Caco-2 (cell line): ENCODE measurements at regions of chr4 and their contacts with region 1.

Region 1: GRCh38 chr4:94833394-94833793 is 75.6 kb downstream of the BMPR1B start:
- DNase-seq: no peak
- H3K4me3 ChIP-seq: no peak overlapping the region
- H3K4me3 Mint-ChIP-seq: no peak overlapping the region
- H3K27ac Mint-ChIP-seq: no peak overlapping the region
- H3K4me1 ChIP-seq: no peaks in the 10 kb centered on the region
- H3K4me1 Mint-ChIP-seq: no peaks in the 10 kb centered on the region
- H3K27me3 ChIP-seq: no peaks in the 10 kb centered on the region
- H3K27me3 Mint-ChIP-seq: no peaks in the 10 kb centered on the region
- CTCF ChIP-seq: no peak

Region 2: DNA sequence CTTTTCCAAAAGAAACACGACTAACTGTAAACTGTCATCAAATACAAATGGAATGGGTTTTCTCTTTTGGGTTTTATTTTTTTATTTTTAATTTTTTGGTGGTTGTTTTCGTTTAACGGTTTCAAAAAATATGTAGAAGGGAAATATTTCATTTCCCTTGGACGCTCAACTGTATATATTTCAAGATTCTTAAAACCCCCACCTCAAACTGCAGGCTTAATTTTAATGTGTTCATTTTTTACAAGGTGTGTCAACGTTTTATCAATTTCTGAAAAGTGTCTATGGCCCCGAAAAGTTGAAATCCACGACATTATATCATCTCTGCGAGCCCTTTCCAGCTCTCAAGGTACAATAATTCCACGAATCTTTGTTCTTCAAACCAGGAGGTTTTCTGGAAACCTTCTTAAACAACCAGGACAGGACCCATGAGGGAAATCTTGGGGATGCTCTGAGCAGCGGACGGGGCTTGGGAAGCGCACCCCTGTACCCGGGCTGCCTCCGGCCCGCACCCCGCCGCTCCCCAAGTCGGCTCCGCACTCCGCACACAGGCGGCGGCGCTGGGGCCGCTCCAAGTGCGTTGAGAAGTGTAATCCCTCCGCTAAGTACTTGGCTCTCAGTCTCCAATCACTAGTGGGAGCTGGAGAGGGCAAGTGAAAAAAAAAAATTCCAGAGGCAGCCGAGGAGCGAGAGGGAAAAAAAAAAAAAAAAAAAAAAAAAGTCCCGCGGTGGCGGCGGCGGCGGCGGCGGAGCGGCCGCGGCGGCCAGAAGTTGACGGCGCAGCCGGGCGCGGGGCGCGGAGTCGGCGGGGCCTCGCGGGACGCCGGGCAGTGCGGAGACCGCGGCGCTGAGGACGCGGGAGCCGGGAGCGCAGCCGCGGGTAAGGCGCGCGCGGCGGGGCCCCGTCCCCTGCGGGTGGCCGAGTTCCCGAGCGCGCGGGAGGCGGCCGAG is 75.9 kb before region 1 on chr4 and contains the start of gene BMPR1B:
- CTCF ChIA-PET with region 1: no interaction called
- POLR2A ChIA-PET with region 1: no interaction called
- intact Hi-C with region 1: no loop called
- DNase-seq: peak in 1 of 2 experiments; percentile 56
- H3K4me3 ChIP-seq: peak within 1 kb of the TSS; percentile 56
- H3K4me3 Mint-ChIP-seq: peak within 1 kb of the TSS; percentile 85
- H3K27ac Mint-ChIP-seq: peak within 1 kb of the TSS; percentile 39
- H3K4me1 ChIP-seq: no peaks in the 10 kb centered on the region
- H3K4me1 Mint-ChIP-seq: peaks cover 15% of the 10 kb centered on the region
- H3K27me3 ChIP-seq: no peaks in the 10 kb centered on the region
- H3K27me3 Mint-ChIP-seq: peaks cover 8% of the 10 kb centered on the region
- CTCF ChIP-seq: peak in 1 of 2 experiments; percentile 23
- total RNA-seq, gene BMPR1B: 8.7 and 9.9 TPM in 2 replicates

Region 3: DNA sequence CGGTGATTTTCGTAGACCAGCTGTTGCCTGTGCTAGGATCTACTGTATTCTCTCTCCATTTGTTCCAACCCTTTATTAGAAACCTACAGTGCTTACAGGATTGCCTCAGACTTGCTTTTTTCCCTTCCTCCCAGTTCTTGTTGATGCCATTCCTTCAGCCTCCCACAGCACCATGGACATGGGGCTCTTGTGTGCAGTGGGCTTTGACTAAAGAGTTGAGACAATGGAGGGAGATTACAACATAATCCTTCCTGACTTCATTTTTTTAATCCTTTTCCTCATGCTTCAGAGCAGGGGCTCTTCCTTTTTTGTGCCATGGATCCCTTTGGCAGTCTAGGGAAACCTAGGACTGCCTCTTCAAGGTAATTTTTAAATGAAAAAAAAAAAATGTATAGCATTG is 16.5 kb after region 1 on chr4:
- CTCF ChIA-PET with region 1: no interaction called
- POLR2A ChIA-PET with region 1: no interaction called
- intact Hi-C with region 1: loop called (anchors 1 kb)
- DNase-seq: no peak
- H3K4me3 ChIP-seq: no peak overlapping the region
- H3K4me3 Mint-ChIP-seq: no peak overlapping the region
- H3K27ac Mint-ChIP-seq: no peak overlapping the region
- H3K4me1 ChIP-seq: no peaks in the 10 kb centered on the region
- H3K4me1 Mint-ChIP-seq: no peaks in the 10 kb centered on the region
- H3K27me3 ChIP-seq: no peaks in the 10 kb centered on the region
- H3K27me3 Mint-ChIP-seq: no peaks in the 10 kb centered on the region
- CTCF ChIP-seq: no peak